Right lobe of liver (tissue), 6 donors: ENCODE measurements at regions of chr1 and their contacts with region 1.

Region 1: DNA sequence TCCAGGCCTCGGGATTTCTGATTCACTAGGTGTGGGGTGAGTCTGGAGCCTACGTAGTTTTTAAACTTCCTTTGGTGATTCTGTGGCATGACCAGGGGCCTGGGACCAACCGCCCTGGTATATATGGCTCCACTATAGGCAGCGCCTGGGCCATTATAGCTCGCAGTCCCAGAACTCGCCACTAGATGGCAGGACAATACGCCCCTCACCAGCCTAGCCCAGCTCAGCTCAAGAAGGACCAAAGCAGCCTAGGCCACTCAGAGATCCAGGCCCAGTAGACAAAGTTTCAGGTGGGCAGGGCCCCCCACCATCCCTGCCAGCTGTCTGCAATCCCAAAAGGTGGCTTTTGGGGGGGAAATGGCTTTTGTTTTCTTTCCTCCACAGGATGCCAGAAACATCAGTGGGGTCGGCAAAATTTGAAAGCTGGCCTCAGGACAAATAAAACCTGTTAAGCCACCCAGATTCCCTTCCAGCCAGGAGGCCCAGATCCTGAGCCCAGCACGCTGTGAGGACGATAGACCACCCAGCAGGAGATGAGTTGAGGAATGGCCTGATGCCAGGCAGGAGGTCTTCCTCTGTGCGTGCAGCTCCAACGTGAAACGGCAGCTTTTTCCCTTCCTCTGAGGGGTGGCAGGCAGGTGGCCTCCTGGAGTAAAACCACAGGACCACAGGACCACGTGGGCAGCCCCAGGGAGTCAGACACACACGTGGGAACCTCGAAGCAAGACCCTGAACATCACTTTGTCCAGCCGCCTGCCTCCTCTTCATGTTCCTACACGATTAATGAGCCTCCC is 24.8 kb upstream of the TMEM51 start:
- DNase-seq: peak; percentile 59 to 69 (median 67)
- ATAC-seq: peak; percentile 94 to 99 (median 97)
- H3K4me3 ChIP-seq: no peak overlapping the region
- H3K27ac ChIP-seq: no peak overlapping the region
- H3K4me1 ChIP-seq: no peaks in the 10 kb centered on the region
- H3K27me3 ChIP-seq: no peaks in the 10 kb centered on the region
- CTCF ChIP-seq: peak; percentile 80 to 89 (median 86)
- POLR2A ChIP-seq: no peak

Region 2: DNA sequence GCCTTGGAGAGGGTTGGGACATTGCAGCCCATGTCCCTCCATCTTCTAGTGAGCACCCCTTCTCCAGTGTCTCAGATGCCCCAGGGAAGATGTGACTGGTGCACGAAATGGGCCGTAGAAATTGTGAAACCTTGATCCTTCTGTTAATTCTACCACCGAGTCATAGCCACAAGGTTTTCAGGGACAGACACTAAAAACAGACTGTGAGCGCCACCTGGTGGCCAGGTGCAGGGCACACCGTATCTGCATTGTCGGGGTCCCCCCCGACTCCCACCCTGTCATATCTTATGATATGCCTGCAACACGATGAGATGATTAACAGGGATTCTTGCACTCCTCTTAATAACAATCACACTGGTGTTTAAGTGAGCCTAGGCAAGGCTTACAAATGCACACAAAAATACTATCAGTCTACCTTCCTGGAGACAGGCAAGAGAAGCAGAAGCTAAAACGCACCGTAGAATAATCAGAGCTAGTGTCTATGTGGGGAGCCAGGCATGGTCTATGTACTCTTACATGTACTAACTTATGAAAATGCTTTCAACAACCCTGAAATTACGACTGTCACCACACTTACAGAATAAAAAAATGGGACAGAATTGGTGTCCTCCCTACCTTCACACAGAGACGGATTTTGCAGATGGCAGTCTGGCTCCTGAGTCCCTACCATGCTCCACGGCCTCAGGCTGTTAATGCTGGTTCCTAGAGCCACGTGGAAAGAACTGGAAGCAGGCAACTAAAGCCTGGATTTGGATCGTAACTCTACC is 176.2 kb after region 1 on chr1:
- intact Hi-C with region 1: loop called (anchors 5 to 10 kb)
- DNase-seq: peak; percentile 68 to 70 (median 70)
- ATAC-seq: peak; percentile 59 to 71 (median 68)
- H3K4me3 ChIP-seq: no peak overlapping the region
- H3K27ac ChIP-seq: no peak overlapping the region
- H3K4me1 ChIP-seq: peaks cover 0 to 13% (median 3%) of the 10 kb centered on the region in 4 donors
- H3K27me3 ChIP-seq: no peaks in the 10 kb centered on the region
- CTCF ChIP-seq: peak; percentile 83 to 97 (median 90)
- POLR2A ChIP-seq: no peak